ENCODE measurements at regions of chr13 and their contacts with region 1.

Region 1: DNA sequence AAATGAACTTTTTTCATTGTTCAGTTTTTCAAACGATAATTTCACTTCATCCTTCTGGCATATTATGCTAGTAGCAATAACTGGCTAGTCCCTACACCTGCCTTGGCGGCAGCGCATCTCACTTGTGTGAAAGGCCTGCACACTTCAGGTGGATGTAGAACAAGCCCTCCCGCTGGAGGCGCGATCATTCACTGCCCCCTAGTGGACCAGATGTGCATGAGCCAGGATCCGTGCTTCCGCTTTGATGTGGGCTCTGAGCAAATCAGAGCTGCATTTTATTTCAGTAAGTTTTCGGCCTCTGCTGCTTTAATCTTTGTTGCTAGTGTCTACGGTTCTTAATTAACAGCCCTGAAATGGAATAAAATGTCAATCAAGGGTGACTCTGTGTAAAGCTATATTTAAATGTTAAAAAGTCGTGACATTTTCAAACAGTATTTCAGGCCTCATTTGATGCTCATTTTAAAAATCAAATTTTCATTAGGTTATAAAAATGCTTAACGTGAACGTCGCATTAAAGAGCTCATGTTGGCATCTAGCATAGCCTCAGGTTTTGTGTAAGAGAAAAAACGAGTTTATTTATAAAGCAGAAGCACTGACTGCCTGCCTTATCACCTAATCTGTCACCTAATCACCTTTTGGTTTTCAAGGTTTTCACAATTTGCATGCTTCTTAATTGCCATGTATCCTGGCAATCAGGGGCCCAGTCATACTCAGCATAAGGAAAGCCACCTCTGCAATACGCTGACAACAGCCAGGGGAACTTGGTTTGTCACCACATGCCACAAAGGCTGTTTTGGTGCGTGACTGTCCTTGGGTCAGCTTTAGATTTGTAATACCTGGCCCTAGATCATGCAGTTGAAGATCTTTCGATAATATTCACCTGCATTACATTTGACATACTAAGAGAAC is 112.2 kb downstream of the TEX26 start:
- DNase-seq: peak; percentile 78
- H3K4me3 Mint-ChIP-seq: peak overlapping the region; percentile 67
- H3K27ac Mint-ChIP-seq: peak overlapping the region; percentile 89
- H3K4me1 Mint-ChIP-seq: peaks cover 14% of the 10 kb centered on the region
- H3K27me3 Mint-ChIP-seq: peaks cover 2% of the 10 kb centered on the region

Region 2: GRCh38 chr13:29733147-29733611 is 1311.5 kb before region 1 on chr13:
- intact Hi-C with region 1: no loop called
- DNase-seq: no peak
- H3K4me3 Mint-ChIP-seq: no peak overlapping the region
- H3K27ac Mint-ChIP-seq: peak overlapping the region; percentile 25
- H3K4me1 Mint-ChIP-seq: peaks cover 9% of the 10 kb centered on the region
- H3K27me3 Mint-ChIP-seq: peaks cover 31% of the 10 kb centered on the region

Region 3: GRCh38 chr13:29935309-29935981 is 1109.2 kb before region 1 on chr13:
- intact Hi-C with region 1: loop called (anchors 5 kb)
- DNase-seq: peak; percentile 82
- H3K4me3 Mint-ChIP-seq: peak overlapping the region; percentile 86
- H3K27ac Mint-ChIP-seq: peak overlapping the region; percentile 95
- H3K4me1 Mint-ChIP-seq: peaks cover 69% of the 10 kb centered on the region
- H3K27me3 Mint-ChIP-seq: no peaks in the 10 kb centered on the region

Region 4: DNA sequence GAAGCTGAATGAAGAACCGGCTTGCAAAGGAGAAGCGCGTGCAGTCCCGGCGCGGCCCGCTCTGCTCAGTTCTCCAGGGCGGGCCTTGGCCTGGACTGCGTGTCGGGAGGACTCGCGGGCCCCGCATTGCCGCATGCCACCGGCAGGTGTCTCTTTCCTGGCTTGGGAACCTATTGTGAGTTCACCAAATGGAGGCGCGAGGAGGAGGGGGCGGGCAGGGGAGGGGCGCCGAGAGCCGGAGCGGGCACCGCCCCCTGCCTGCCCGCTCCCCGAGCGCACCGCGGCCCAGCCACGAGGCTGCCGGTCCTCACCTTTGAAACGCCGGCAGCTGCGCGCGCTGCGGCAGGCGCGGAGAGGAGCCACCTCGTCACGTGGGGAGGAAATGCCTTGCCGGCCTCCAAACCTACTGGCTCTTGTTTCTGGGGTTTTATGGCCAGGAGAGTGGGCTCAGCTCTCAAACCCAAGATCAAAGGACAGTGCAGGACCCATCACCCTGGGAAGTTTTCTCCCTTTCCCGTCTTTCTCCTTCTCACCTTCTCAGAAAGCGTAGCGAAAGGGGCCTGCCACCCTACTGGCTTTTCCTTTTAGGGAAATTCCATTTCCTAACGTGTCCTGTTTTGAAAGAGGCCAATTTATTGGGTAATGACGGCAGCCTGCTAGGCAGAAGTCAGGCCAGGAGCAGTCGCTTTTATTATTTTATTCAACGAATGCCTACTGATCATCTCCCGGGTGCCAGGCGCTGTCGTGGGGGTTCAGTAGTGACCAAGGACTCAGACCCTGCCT is 636.1 kb before region 1 on chr13:
- intact Hi-C with region 1: loop called (anchors 10 kb)
- DNase-seq: peak; percentile 88
- H3K4me3 Mint-ChIP-seq: peak overlapping the region; percentile 72
- H3K27ac Mint-ChIP-seq: peak overlapping the region; percentile 79
- H3K4me1 Mint-ChIP-seq: peaks cover 36% of the 10 kb centered on the region
- H3K27me3 Mint-ChIP-seq: peaks cover 10% of the 10 kb centered on the region

Region 5: GRCh38 chr13:30802953-30803478 is 241.6 kb before region 1 on chr13:
- intact Hi-C with region 1: loop called (anchors 1 kb)
- DNase-seq: peak; percentile 69
- H3K4me3 Mint-ChIP-seq: peak overlapping the region; percentile 47
- H3K27ac Mint-ChIP-seq: no peak overlapping the region
- H3K4me1 Mint-ChIP-seq: peaks cover 28% of the 10 kb centered on the region
- H3K27me3 Mint-ChIP-seq: peaks cover 4% of the 10 kb centered on the region

Region 6: GRCh38 chr13:30978981-30979956 is 65.4 kb before region 1 on chr13:
- intact Hi-C with region 1: loop called (anchors 1 kb)
- DNase-seq: peak; percentile 15
- H3K4me3 Mint-ChIP-seq: no peak overlapping the region
- H3K27ac Mint-ChIP-seq: no peak overlapping the region
- H3K4me1 Mint-ChIP-seq: no peaks in the 10 kb centered on the region
- H3K27me3 Mint-ChIP-seq: peaks cover 16% of the 10 kb centered on the region

Region 7: GRCh38 chr13:31134039-31134711 is 89.5 kb after region 1 on chr13:
- intact Hi-C with region 1: loop called (anchors 1 kb)
- DNase-seq: no peak
- H3K4me3 Mint-ChIP-seq: peak overlapping the region; percentile 27
- H3K27ac Mint-ChIP-seq: peak overlapping the region; percentile 95
- H3K4me1 Mint-ChIP-seq: peaks cover 67% of the 10 kb centered on the region
- H3K27me3 Mint-ChIP-seq: no peaks in the 10 kb centered on the region